Thyroid gland (tissue), 4 donors: ENCODE measurements at regions of chr15 and their contacts with region 1.

Region 1: GRCh38 chr15:79184465-79184892 is 93.9 kb upstream of the RASGRF1 start:
- DNase-seq: peak; percentile 67 to 76
- H3K4me3 ChIP-seq: no peak overlapping the region
- H3K27ac ChIP-seq: no peak overlapping the region
- H3K4me1 ChIP-seq: no peaks in the 10 kb centered on the region
- H3K27me3 ChIP-seq: no peaks in the 10 kb centered on the region
- CTCF ChIP-seq: peak; percentile 68 to 94 (median 84)
- POLR2A ChIP-seq: no peak

Region 2: DNA sequence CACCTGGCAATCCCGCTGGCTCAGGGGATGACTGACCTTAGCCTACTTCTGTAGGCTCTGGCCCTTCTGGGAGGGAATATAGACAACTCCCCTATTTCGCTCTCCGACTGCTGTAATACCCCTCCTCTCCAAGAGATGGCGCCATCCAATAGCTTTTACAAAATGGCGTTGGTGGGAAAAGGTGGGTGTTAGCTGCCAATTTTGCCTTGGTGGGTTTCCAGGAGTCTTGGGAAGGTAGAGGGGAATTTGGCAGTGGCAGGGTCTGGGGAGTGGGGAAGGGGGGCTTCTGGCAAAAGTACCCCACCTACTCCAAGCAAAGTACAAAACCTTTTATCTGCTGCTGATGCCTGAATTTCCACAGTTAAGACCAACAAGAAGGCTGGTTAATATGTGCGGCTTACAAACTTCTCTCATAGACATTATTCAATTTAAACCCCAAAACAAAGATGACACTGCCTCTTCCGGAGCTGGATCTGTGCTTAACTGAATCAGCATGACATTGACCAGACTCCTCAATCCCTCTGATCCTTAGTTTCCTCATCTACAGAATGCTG is 156.0 kb before region 1 on chr15:
- intact Hi-C with region 1: loop called (anchors 5 kb)
- DNase-seq: peak; percentile 9 to 17
- H3K4me3 ChIP-seq: no peak overlapping the region
- H3K27ac ChIP-seq: no peak overlapping the region
- H3K4me1 ChIP-seq: no peaks in the 10 kb centered on the region
- H3K27me3 ChIP-seq: no peaks in the 10 kb centered on the region
- CTCF ChIP-seq: peak; percentile 11 to 64 (median 38)
- POLR2A ChIP-seq: no peak